ENCODE measurements at regions of chr17 and their contacts with region 1.

Region 1: DNA sequence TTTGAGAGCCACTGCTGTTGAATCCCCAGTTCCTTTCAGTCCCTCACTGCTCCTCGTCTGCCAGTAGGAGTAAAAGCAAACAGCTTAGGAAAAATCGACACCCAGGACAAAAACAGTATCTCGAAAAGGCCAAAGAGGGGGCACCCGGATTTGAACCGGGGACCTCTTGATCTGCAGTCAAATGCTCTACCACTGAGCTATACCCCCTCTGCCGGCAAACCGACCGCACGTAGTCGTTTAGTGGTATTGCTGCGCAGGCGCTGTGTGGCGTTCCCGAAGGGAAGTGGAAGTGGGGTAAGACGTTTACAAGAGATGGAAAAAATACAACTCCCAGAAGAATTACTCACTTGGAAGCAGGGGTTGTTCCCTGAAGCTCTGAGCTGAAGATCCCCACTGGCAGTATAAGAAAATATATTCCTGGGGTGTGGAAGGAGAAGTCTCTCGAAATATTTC is 2.2 kb upstream of the PLXDC1 start:
- DNase-seq: peak; percentile 87 to 93 (median 92)
- H3K4me3 ChIP-seq: peak overlapping the region; percentile 82 to 98
- H3K4me3 Mint-ChIP-seq: peak overlapping the region; percentile 96 to 100 (median 99)
- H3K27ac ChIP-seq: peak overlapping the region; percentile 66
- H3K27ac Mint-ChIP-seq: peak overlapping the region; percentile 93 to 100 (median 98)
- H3K4me1 ChIP-seq: peaks cover 33% of the 10 kb centered on the region
- H3K4me1 Mint-ChIP-seq: peaks cover 28 to 57% (median 43%) of the 10 kb centered on the region in 4 donors
- H3K27me3 ChIP-seq: no peaks in the 10 kb centered on the region
- H3K27me3 Mint-ChIP-seq: peaks cover 3 to 18% of the 10 kb centered on the region in 2 donors

Region 2: GRCh38 chr17:38824899-38825761 is 328.5 kb before region 1 on chr17 and contains the start of gene CWC25:
- CTCF ChIA-PET with region 1: interaction called, 4 read pairs
- POLR2A ChIA-PET with region 1: no interaction called
- intact Hi-C with region 1: loop called (anchors 2 kb)
- DNase-seq: peak; percentile 94 to 99 (median 97)
- H3K4me3 ChIP-seq: peak within 1 kb of the TSS; percentile 71 to 89
- H3K4me3 Mint-ChIP-seq: peak within 1 kb of the TSS; percentile 94 to 99 (median 98)
- H3K27ac ChIP-seq: peak within 1 kb of the TSS; percentile 98
- H3K27ac Mint-ChIP-seq: peak within 1 kb of the TSS; percentile 99 to 100 (median 100)
- H3K4me1 ChIP-seq: peaks cover 23% of the 10 kb centered on the region
- H3K4me1 Mint-ChIP-seq: peaks cover 15 to 42% (median 30%) of the 10 kb centered on the region in 4 donors
- H3K27me3 ChIP-seq: no peaks in the 10 kb centered on the region
- H3K27me3 Mint-ChIP-seq: peaks cover 0 to 5% of the 10 kb centered on the region in 2 donors
- total RNA-seq, gene CWC25: 44.4 to 46.8 TPM

Region 3: GRCh38 chr17:38967290-38967738 is 186.3 kb before region 1 on chr17 and contains the start of gene FBXO47:
- CTCF ChIA-PET with region 1: interaction called, 8 read pairs
- POLR2A ChIA-PET with region 1: interaction called, 15 read pairs
- intact Hi-C with region 1: loop called (anchors 5 kb)
- DNase-seq: peak; percentile 69 to 89 (median 77)
- H3K4me3 ChIP-seq: peak within 1 kb of the TSS in 1 of 2 donors; percentile 10
- H3K4me3 Mint-ChIP-seq: peak within 1 kb of the TSS; percentile 70 to 87 (median 81)
- H3K27ac ChIP-seq: no peak within 1 kb of the TSS
- H3K27ac Mint-ChIP-seq: peak within 1 kb of the TSS; percentile 74 to 90 (median 86)
- H3K4me1 ChIP-seq: peaks cover 7% of the 10 kb centered on the region
- H3K4me1 Mint-ChIP-seq: peaks cover 7 to 16% (median 12%) of the 10 kb centered on the region in 4 donors
- H3K27me3 ChIP-seq: no peaks in the 10 kb centered on the region
- H3K27me3 Mint-ChIP-seq: no peaks in the 10 kb centered on the region
- total RNA-seq, gene FBXO47: not detected

Region 4: GRCh38 chr17:39082482-39082881 is 71.1 kb before region 1 on chr17:
- CTCF ChIA-PET with region 1: interaction called, 17 read pairs
- POLR2A ChIA-PET with region 1: interaction called, 3 read pairs
- intact Hi-C with region 1: no loop called
- DNase-seq: no peak
- H3K4me3 ChIP-seq: no peak overlapping the region
- H3K4me3 Mint-ChIP-seq: no peak overlapping the region
- H3K27ac ChIP-seq: no peak overlapping the region
- H3K27ac Mint-ChIP-seq: no peak overlapping the region
- H3K4me1 ChIP-seq: no peaks in the 10 kb centered on the region
- H3K4me1 Mint-ChIP-seq: no peaks in the 10 kb centered on the region
- H3K27me3 ChIP-seq: no peaks in the 10 kb centered on the region
- H3K27me3 Mint-ChIP-seq: no peaks in the 10 kb centered on the region

Region 5: DNA sequence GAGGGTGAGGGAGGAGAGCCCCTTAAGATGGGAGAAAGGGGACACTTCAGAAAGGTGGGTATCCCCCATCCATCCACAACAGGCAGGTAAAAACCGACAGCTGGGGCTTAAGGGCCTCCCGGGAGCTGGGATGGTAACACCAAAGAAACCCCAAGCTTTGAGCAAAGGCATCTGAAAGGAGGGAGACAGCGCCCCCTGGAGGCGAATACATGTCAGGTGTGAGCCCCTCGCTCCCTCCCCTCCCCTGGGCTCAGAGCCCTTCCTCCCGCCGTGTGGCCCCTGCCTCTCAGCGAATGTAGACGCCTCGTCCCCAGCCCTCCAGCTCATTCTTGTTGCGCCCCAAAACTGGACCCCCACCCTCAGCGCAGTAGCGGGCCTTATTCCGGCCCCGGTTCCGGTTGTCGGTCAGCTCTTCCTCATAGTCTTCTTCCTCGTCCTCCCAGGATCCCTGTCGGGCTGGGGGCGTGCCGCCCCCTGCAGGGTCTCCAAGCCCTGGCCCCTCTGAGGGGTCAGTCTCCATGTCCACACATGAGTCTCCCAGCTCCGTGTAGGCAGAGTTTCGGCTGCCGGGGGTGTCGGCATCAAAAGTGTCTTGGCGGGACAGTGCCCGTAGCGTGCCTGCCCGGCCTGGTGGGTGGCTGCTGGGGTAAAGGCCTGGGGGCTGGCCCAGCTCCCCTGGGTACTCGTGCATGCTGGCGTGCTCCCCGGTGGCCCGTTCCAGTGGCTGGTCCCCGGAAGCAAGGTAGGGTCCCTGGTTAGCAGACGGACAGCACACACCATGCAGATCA is 21.5 kb after region 1 on chr17:
- CTCF ChIA-PET with region 1: interaction called, 27 read pairs
- POLR2A ChIA-PET with region 1: interaction called, 17 read pairs
- intact Hi-C with region 1: no loop called
- DNase-seq: peak; percentile 68 to 73 (median 72)
- H3K4me3 ChIP-seq: no peak overlapping the region
- H3K4me3 Mint-ChIP-seq: no peak overlapping the region
- H3K27ac ChIP-seq: no peak overlapping the region
- H3K27ac Mint-ChIP-seq: peak overlapping the region in 6 of 7 donors; percentile 23 to 84 (median 67)
- H3K4me1 ChIP-seq: no peaks in the 10 kb centered on the region
- H3K4me1 Mint-ChIP-seq: peaks cover 5 to 24% (median 10%) of the 10 kb centered on the region in 4 donors
- H3K27me3 ChIP-seq: no peaks in the 10 kb centered on the region
- H3K27me3 Mint-ChIP-seq: no peaks in the 10 kb centered on the region

Measured in CD4-positive, alpha-beta memory T cell (primary cell).